Posterior cingulate gyrus (tissue), 11 donors: ENCODE measurements at regions of chrX and their contacts with region 1.

Region 1: GRCh38 chrX:72306851-72307645 is 1.3 kb upstream of the CITED1 start:
- DNase-seq: peak; percentile 39 to 92 (median 48)

Region 2: GRCh38 chrX:71556036-71556435 is 751.0 kb before region 1 on chrX:
- intact Hi-C with region 1: no loop called
- DNase-seq: no peak

Region 3: DNA sequence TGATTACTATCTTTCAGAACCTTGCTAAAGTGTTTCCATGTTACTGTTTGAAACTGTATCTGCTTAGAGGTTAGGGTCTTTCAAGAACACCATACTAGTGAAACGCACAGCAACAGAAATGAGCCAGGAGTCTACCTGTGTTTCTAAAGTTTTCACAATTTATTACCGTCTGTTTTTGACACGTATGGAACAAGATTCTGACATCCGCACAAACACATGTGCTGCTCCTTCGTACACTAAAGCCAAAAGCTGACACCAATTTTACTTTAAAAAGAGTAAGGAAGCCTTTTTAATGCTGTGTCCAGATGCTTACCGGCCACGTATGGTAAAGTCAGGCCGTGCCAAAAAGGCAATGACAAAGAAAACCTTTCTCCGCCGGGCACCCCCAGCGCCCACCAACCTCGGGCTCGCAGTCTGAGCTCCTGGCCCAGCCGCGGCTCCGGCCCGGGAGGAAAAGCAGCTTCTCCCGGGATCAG is 30.5 kb before region 1 on chrX:
- intact Hi-C with region 1: loop called (anchors 2 kb)
- DNase-seq: no peak

Region 4: DNA sequence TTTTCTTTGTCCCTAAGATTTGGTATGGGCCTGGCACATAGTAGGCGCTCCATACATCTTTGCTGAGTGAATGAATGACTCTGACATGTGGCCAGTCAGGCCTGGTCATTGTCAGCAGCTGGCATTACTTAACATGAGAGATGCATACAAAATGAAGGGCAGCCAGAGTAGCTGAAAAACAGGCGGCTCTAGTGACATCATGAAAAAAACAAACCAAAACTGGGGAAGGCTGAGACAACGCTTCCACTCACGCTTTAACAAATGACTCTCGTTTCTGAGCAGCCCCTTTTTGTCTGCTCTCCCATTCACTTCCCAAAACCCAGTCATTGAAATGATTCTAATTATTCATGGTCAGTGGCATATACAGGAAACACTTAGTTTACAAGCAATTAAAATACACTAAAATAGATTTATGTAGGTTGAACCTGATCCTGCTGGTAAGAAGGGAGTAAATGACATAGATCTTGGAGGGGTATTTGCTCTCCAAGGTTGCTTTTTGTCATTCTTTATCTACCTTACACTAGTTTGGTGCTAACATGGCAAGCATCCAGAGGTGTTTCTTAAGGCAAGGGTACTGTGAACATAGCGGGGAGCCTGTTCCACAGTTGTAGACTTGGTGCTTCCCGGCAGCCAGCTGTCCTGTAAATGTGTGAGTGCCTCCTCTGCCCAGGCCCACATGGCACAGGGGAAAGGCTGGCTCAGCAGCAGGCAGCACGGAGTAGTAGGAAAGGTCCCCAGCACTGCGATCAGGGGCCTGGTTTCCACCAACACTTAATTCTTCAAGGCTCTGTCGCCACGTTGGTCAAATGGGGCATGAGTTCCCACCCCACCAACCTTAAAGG is 59.8 kb after region 1 on chrX:
- intact Hi-C with region 1: no loop called
- DNase-seq: no peak

Region 5: GRCh38 chrX:72572248-72573157 is 265.5 kb after region 1 on chrX and contains the start of gene HDAC8:
- intact Hi-C with region 1: loop called (anchors 10 kb)
- DNase-seq: peak; percentile 26 to 94 (median 62)